ENCODE measurements at regions of chrX and their contacts with region 1.

Region 1: GRCh38 chrX:15242899-15243555 is 26.9 kb downstream of the ASB9 start:
- DNase-seq: peak; percentile 68
- H3K4me3 Mint-ChIP-seq: no peak overlapping the region
- H3K27ac Mint-ChIP-seq: no peak overlapping the region
- H3K4me1 Mint-ChIP-seq: no peaks in the 10 kb centered on the region
- H3K27me3 Mint-ChIP-seq: peaks cover under 1% of the 10 kb centered on the region
- CTCF ChIP-seq: peak; percentile 52

Region 2: GRCh38 chrX:14039344-14039743 is 1203.7 kb before region 1 on chrX:
- CTCF ChIA-PET with region 1: interaction called, 9 read pairs
- POLR2A ChIA-PET with region 1: no interaction called
- intact Hi-C with region 1: loop called (anchors 1 kb)
- DNase-seq: peak; percentile 75
- H3K4me3 Mint-ChIP-seq: no peak overlapping the region
- H3K27ac Mint-ChIP-seq: no peak overlapping the region
- H3K4me1 Mint-ChIP-seq: no peaks in the 10 kb centered on the region
- H3K27me3 Mint-ChIP-seq: peaks cover 81% of the 10 kb centered on the region
- CTCF ChIP-seq: peak; percentile 81

Region 3: GRCh38 chrX:14095702-14096101 is 1147.3 kb before region 1 on chrX:
- CTCF ChIA-PET with region 1: interaction called, 4 read pairs
- POLR2A ChIA-PET with region 1: no interaction called
- intact Hi-C with region 1: loop called (anchors 1 kb)
- DNase-seq: peak; percentile 82
- H3K4me3 Mint-ChIP-seq: no peak overlapping the region
- H3K27ac Mint-ChIP-seq: no peak overlapping the region
- H3K4me1 Mint-ChIP-seq: no peaks in the 10 kb centered on the region
- H3K27me3 Mint-ChIP-seq: peaks cover 80% of the 10 kb centered on the region
- CTCF ChIP-seq: peak; percentile 79

Region 4: GRCh38 chrX:14528629-14529289 is 714.3 kb before region 1 on chrX:
- CTCF ChIA-PET with region 1: no interaction called
- POLR2A ChIA-PET with region 1: no interaction called
- intact Hi-C with region 1: loop called (anchors 1 kb)
- DNase-seq: peak; percentile 74
- H3K4me3 Mint-ChIP-seq: peak overlapping the region; percentile 61
- H3K27ac Mint-ChIP-seq: no peak overlapping the region
- H3K4me1 Mint-ChIP-seq: peaks cover 5% of the 10 kb centered on the region
- H3K27me3 Mint-ChIP-seq: peaks cover 15% of the 10 kb centered on the region
- CTCF ChIP-seq: peak; percentile 55

Region 5: GRCh38 chrX:14757761-14758491 is 485.1 kb before region 1 on chrX:
- CTCF ChIA-PET with region 1: no interaction called
- POLR2A ChIA-PET with region 1: no interaction called
- intact Hi-C with region 1: no loop called
- DNase-seq: no peak
- H3K4me3 Mint-ChIP-seq: no peak overlapping the region
- H3K27ac Mint-ChIP-seq: no peak overlapping the region
- H3K4me1 Mint-ChIP-seq: no peaks in the 10 kb centered on the region
- H3K27me3 Mint-ChIP-seq: peaks cover 28% of the 10 kb centered on the region
- CTCF ChIP-seq: no peak

Region 6: DNA sequence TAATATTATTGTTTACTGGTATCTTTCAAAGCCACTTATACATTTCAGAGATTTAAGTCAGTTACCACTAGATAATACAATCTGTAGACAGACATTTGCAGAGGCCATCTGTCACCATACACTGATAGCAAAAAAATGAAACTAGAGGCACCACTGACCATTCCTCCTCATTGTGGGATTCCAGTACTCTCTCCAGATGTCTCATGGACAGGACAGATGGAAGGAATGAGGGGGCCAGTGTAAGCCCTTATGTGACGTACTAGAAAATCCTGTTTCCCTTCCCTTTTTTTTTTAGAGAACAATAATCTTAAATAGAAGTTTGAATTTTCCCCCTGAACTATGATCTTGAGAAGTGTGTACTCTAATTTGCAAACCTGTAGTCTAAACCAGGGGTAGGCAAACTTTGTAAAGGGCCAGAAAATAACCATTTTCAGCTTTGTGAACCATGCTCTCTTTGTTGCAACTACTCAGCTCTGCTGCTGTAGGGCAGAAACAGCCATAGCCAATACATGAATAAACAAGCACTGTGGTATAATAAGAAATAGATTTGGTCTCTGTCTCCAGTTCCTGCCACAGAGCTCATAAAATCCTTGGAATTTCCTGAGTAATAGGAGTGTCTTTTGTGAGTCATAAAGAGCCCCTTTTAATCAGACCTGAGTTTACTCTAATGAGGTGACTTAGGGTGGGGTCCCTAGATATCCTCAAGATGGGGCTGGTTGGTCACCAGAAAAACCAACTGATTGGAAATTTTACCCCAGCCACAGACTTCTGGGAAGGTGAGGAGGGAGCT is 279.4 kb before region 1 on chrX:
- CTCF ChIA-PET with region 1: no interaction called
- POLR2A ChIA-PET with region 1: no interaction called
- intact Hi-C with region 1: loop called (anchors 1 kb)
- DNase-seq: no peak
- H3K4me3 Mint-ChIP-seq: no peak overlapping the region
- H3K27ac Mint-ChIP-seq: no peak overlapping the region
- H3K4me1 Mint-ChIP-seq: no peaks in the 10 kb centered on the region
- H3K27me3 Mint-ChIP-seq: peaks cover 11% of the 10 kb centered on the region
- CTCF ChIP-seq: no peak

Region 7: DNA sequence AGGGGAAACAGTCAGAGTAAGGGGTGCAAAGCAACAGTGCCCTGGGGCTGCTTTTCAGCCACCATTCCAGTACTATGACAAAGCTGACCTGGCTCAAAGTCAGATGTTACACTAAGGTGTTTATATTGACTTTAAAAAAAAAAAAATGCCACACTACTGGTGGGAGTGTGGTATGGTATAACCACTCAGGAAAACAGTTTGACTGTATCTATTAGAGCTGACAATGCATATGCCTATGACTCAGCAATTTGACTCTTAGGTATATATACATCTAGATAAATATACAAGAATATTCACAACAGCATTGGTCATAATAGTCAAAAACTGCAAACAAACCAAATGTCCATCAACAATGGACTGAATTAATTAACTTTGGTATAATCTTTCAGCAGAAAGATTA is 11.8 kb after region 1 on chrX:
- CTCF ChIA-PET with region 1: interaction called, 14 read pairs
- POLR2A ChIA-PET with region 1: no interaction called
- intact Hi-C with region 1: no loop called
- DNase-seq: no peak
- H3K4me3 Mint-ChIP-seq: no peak overlapping the region
- H3K27ac Mint-ChIP-seq: no peak overlapping the region
- H3K4me1 Mint-ChIP-seq: no peaks in the 10 kb centered on the region
- H3K27me3 Mint-ChIP-seq: peaks cover 19% of the 10 kb centered on the region
- CTCF ChIP-seq: no peak

Region 8: GRCh38 chrX:15564981-15565579 is 322.1 kb after region 1 on chrX:
- CTCF ChIA-PET with region 1: no interaction called
- POLR2A ChIA-PET with region 1: no interaction called
- intact Hi-C with region 1: no loop called
- DNase-seq: peak; percentile 83
- H3K4me3 Mint-ChIP-seq: no peak overlapping the region
- H3K27ac Mint-ChIP-seq: no peak overlapping the region
- H3K4me1 Mint-ChIP-seq: no peaks in the 10 kb centered on the region
- H3K27me3 Mint-ChIP-seq: peaks cover 69% of the 10 kb centered on the region
- CTCF ChIP-seq: peak; percentile 84